ENCODE measurements at regions of chr13 and their contacts with region 1.

Region 1: GRCh38 chr13:62320129-62321108 is 904.8 kb upstream of the PCDH20 start:
- DNase-seq: peak; percentile 23
- CTCF ChIP-seq: peak; percentile 50

Region 2: DNA sequence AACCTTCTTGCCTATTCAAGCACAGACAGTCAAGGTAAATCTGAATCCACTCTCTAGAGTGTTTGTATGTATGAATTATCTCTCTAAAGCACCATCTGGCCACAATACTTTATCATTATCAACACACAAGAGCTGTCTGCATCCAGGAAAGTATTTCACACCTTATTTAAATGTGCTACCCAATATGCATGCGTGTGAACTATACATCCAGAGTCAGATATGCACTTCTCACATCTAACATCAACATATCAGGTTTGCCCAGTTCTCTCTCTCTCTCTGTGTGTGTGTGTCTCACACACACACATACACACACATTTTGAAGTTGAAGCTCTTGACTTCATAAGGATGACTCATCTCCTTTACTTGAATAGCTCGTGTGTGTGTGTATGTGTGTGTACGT is 207.2 kb before region 1 on chr13:
- CTCF ChIA-PET with region 1: no interaction called
- POLR2A ChIA-PET with region 1: no interaction called
- DNase-seq: no peak
- CTCF ChIP-seq: no peak

Region 3: DNA sequence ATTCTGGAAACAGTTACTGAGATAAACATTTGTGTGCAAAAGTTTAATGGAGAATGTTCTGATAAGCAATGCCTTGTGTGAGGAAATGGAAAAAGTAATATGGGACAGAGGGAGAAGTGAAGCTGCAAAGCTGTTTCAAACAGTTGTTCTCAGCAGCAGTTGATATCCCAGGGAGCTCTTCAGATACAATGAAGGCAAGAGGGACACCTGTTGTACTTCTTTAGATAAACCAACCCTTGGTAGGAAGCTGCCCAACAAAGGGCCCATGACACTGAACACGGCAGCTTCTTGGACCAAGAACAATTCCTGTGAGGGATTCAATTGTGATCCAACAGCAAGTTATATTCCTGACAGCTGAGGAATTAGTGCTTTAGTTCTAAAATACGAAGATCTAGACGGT is 10.5 kb before region 1 on chr13:
- CTCF ChIA-PET with region 1: interaction called, 14 read pairs
- POLR2A ChIA-PET with region 1: no interaction called
- DNase-seq: no peak
- CTCF ChIP-seq: no peak

Region 4: DNA sequence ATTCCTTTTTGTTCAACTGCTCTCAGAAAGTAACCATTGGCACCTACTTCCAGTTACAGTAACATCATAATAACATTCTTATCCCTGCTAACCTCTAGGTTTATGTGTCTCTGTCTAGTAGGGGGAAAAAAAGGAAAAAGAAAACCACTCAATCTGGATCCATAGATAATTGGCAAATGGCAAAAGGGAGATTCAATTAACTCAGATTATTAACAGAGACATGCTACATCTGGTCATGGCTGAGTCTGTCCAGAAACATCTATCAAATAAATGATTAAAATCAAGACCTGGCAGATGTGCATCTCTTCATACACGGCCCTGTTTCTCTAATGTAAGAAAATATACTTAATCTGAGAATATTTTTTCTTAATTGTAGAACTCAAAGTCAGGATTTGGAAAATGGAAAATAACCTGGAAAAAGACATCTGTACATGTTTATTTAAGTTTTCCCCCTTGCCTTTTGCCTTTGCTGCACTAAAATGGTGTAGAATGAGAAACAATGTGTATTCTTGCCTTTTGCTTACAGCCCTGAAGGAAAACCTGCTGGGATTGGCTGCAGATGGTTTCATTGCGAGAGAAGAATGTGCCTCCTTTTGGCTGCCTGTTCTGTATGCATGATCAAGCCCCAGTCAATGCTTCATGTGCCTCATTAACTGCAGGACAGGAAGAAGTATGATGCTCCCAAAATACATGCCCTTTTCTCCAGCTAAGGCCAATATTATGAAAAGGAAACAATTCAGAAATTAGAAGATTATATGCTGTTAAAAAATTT is 16.9 kb after region 1 on chr13:
- CTCF ChIA-PET with region 1: no interaction called
- POLR2A ChIA-PET with region 1: no interaction called
- DNase-seq: no peak
- CTCF ChIP-seq: no peak

Measured in GM10248 (cell line).